Activated naive CD8-positive, alpha-beta T cell treated with anti-CD3 and anti-CD28 coated beads, Interleukin-2, amount 10 ng/mL, durations not matched to agents 7 days and 5 days (primary cell): ENCODE measurements at regions of chr12 and their contacts with region 1.

Region 1: GRCh38 chr12:53267999-53268647 is at the start of gene ESPL1:
- DNase-seq: peak; percentile 92
- ATAC-seq: peak; percentile 92
- H3K4me3 Mint-ChIP-seq: peak within 1 kb of the TSS; percentile 99
- H3K27ac Mint-ChIP-seq: peak within 1 kb of the TSS; percentile 97
- H3K4me1 Mint-ChIP-seq: peaks cover 41% of the 10 kb centered on the region
- H3K27me3 Mint-ChIP-seq: no peaks in the 10 kb centered on the region
- total RNA-seq, gene ESPL1: 90.5 to 91.0 TPM

Region 2: DNA sequence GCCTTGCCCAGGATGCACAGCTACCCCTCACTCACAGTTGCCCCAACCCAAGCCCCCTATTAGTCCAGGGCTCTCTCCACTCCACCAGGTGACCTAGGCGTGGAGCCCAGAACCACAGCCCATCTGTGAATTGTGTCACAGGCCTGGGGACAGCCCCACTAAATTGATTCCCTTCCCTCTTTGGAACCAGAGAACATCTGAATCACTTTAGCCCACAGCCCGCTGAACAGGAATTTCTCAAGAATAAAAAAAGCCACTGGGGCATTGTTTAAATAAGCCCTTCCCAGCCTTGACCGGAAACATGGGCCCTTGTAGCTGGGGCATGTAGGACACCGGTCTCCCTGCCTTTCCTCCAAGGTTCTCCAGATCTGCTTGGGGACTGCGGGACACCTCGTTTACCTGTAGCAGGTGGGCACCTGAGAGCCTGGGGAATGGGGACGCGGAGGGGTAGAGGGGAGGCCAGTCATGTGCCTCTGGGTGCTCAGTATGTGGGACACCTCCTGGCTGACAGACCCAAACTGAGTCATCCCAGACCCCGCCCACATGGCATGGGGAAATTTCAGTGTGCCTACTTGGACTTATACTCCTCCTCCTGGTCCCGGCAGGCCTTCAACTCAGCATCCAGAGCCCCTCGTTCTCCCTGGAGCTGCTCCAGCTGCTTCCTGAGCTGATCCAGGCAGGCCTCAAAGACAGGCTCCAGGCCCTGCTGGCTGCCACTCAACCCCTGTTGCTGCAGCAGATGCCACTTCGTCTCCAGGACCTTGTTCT is 420.6 kb before region 1 on chr12:
- POLR2A ChIA-PET with region 1: no interaction called
- DNase-seq: no peak
- ATAC-seq: no peak
- H3K4me3 Mint-ChIP-seq: no peak overlapping the region
- H3K27ac Mint-ChIP-seq: no peak overlapping the region
- H3K4me1 Mint-ChIP-seq: peaks cover 2% of the 10 kb centered on the region
- H3K27me3 Mint-ChIP-seq: peaks cover 14% of the 10 kb centered on the region

Region 3: DNA sequence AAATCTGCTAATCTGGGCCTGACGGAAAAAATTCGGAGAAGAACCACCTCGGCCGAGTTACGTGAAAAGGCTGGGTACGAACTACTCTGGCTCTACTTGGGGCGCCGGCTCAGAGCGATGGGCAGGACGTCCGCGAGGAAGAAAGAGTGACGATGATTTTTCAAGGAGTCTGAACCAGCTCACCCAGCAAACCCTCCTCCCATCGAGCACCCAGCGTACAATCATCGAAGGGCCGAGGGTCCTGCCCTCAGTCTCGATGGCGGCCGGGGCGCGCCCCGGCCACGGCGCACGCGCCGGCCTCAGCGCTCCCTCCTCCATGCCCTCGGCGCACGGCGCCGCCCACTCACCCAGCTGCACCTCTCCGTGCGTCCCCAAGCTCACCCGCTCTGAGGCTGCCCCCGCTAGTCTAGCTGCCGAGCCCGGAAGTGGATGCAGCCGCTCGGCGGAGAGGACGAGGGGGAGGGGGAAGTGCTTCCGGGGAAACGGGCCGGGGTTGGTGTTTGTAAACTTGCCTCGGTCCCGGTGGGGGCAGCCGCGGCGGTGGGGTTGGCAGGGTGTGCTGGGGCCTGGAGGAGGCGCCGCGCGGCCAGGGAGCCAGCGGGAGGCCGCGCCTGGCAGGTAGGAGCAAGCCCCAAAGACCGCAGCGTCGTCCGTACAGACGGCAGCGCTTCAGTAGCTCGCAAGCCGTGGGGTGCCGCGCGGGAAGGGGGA is 87.7 kb before region 1 on chr12 and contains the starts of genes CSAD and ZNF740:
- POLR2A ChIA-PET with region 1: interaction called, 17 read pairs
- DNase-seq: peak; percentile 94
- ATAC-seq: peak; percentile 97
- H3K4me3 Mint-ChIP-seq: peak within 1 kb of the TSS; percentile 86
- H3K27ac Mint-ChIP-seq: peak within 1 kb of the TSS; percentile 93
- H3K4me1 Mint-ChIP-seq: peaks cover 36% of the 10 kb centered on the region
- H3K27me3 Mint-ChIP-seq: no peaks in the 10 kb centered on the region
- total RNA-seq, gene CSAD: 28.1 to 38.3 TPM
- total RNA-seq, gene ZNF740: 53.6 to 60.2 TPM

Region 4: DNA sequence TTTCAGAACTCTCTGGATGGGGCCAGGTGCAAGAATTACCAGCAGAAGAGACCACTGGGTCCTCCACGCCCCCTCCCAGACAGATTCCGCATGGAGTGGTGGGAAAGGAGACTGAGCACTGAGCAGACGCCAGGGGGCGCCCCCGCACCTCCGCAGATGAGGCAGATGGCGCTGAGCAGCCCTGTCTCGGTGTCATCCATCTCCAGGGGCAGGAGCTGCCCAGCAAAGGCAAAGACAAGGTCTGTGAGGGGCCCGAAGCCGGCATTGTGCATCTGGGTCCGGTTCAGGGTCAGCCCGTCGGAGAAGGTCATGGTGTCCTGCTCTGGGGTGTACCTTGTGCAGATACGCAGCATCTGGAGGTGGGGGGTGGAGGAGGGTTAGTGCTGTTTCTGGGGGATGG is 54.8 kb before region 1 on chr12:
- POLR2A ChIA-PET with region 1: interaction called, 48 read pairs
- DNase-seq: peak; percentile 90
- ATAC-seq: peak; percentile 63
- H3K4me3 Mint-ChIP-seq: no peak overlapping the region
- H3K27ac Mint-ChIP-seq: peak overlapping the region; percentile 53
- H3K4me1 Mint-ChIP-seq: peaks cover 65% of the 10 kb centered on the region
- H3K27me3 Mint-ChIP-seq: no peaks in the 10 kb centered on the region

Region 5: GRCh38 chr12:53251477-53252348 is 16.4 kb before region 1 on chr12:
- POLR2A ChIA-PET with region 1: interaction called, 24 read pairs
- DNase-seq: peak; percentile 85
- ATAC-seq: peak; percentile 85
- H3K4me3 Mint-ChIP-seq: peak overlapping the region; percentile 98
- H3K27ac Mint-ChIP-seq: peak overlapping the region; percentile 95
- H3K4me1 Mint-ChIP-seq: peaks cover 41% of the 10 kb centered on the region
- H3K27me3 Mint-ChIP-seq: no peaks in the 10 kb centered on the region

Region 6: DNA sequence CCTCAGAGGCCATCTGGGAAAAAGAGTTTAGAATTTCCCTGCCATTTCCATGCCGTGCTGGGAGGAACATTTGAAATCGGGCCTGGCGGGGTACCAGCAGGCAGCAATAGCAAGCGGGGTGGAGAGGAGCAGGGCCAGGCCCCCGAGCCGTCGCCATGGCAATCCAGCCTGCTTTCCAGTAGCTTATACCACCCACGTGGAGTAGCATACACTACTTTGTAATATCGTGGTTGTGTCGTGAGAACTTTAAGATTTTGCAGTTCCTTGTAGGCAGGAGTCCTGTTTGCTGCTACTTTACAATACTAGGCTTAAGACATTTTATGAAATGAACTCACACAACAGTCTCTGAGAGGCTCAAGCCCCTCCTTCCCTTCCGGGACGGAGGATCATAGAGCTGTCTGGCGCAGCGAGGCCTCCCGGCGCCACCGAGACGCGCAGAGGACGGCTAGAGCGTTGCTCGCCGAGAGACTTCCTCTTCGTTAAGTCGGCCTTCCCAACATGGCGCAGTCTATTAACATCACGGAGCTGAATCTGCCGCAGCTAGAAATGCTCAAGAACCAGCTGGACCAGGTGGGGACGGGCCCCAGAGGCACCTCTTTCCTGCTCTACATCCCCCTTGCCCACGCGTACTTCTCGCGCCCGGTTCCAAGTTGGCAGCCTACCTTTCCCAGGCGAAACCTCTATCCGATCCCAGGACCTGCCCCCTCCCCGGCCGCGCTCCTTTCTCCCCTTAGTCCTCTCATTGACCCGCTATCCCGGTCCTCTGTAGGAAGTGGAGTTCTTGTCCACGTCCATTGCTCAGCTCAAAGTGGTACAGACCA is 27.2 kb after region 1 on chr12 and contains the start of gene PFDN5:
- POLR2A ChIA-PET with region 1: interaction called, 12 read pairs
- DNase-seq: peak; percentile 82
- ATAC-seq: peak; percentile 89
- H3K4me3 Mint-ChIP-seq: peak within 1 kb of the TSS; percentile 98
- H3K27ac Mint-ChIP-seq: peak within 1 kb of the TSS; percentile 92
- H3K4me1 Mint-ChIP-seq: peaks cover 36% of the 10 kb centered on the region
- H3K27me3 Mint-ChIP-seq: no peaks in the 10 kb centered on the region
- total RNA-seq, gene PFDN5: 388 to 425 TPM